HepG2 (cell line): ENCODE measurements at regions of chr3 and their contacts with region 1.

Region 1: GRCh38 chr3:8663177-8664061 is 18.8 kb upstream of the SSUH2 start:
- DNase-seq: peak; percentile 95
- ATAC-seq: peak; percentile 89
- H3K4me3 ChIP-seq: no peak overlapping the region
- H3K27ac ChIP-seq: peak overlapping the region; percentile 45
- H3K4me1 ChIP-seq: peaks cover 94% of the 10 kb centered on the region
- H3K27me3 ChIP-seq: no peaks in the 10 kb centered on the region
- CTCF ChIP-seq: peak; percentile 82
- EP300 ChIP-seq: peak in 1 of 2 experiments; percentile 48; a peak in 1 of 4 replicates
- POLR2A ChIP-seq: no peak
- RAD21 ChIP-seq: peak; percentile 65

Region 2: DNA sequence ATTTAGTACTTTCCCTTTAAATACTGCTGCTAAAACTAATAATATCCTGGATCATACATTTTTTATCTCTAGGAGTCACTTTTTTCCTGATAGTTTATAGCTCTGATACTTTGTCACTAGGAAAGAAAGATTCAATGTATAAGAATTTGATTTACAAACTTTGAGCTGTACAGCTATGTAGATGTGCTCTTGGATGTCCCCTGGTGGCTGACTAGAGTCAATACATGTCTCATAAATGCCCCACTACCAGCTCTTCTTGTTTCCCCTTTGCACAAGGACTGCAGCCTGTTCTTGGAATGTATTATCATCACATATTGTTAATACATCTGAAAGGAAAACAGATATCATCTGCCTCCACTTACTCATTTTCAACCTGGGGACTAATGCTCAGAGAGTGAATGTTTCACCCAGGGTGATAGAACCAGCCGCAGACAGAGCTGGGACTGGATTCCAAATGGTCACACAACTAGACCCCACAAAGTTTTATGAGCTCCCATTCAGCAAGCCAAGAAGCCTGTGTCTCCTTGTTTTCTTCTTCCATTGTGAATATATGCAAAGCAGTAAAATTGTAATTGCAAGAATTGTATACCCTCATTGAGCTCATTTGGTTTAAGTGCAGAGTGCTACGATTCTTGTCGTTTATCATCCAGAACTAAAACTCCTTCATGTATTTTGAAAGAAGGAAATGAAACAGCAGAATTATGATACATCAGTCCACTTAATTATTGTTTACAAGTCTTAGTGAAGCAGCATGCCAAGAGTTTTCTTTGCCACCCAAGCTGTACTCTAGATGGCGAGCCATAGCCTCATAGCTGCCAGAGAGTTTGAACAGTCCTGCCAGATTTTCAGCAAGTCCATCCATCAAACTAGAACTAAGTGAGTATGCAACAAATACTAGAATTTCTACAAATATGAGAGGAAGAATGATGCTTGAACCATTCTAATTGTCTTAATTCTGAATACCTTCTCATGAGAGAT is 423.4 kb before region 1 on chr3:
- CTCF ChIA-PET with region 1: no interaction called
- POLR2A ChIA-PET with region 1: no interaction called
- in situ Hi-C with region 1: no loop called
- intact Hi-C with region 1: no loop called
- DNase-seq: peak; percentile 27
- ATAC-seq: peak; percentile 85
- H3K4me3 ChIP-seq: no peak overlapping the region
- H3K27ac ChIP-seq: no peak overlapping the region
- H3K4me1 ChIP-seq: no peaks in the 10 kb centered on the region
- H3K27me3 ChIP-seq: no peaks in the 10 kb centered on the region
- CTCF ChIP-seq: peak; percentile 64
- EP300 ChIP-seq: no peak
- POLR2A ChIP-seq: no peak
- RAD21 ChIP-seq: no peak

Region 3: GRCh38 chr3:8650583-8651416 is 12.6 kb before region 1 on chr3:
- CTCF ChIA-PET with region 1: no interaction called
- POLR2A ChIA-PET with region 1: interaction called, 20 read pairs
- in situ Hi-C with region 1: no loop called
- intact Hi-C with region 1: no loop called
- DNase-seq: peak; percentile 69
- ATAC-seq: no peak
- H3K4me3 ChIP-seq: peak overlapping the region; percentile 56 to 71 (median 58)
- H3K27ac ChIP-seq: peak overlapping the region; percentile 83
- H3K4me1 ChIP-seq: peaks cover 100% of the 10 kb centered on the region
- H3K27me3 ChIP-seq: no peaks in the 10 kb centered on the region
- CTCF ChIP-seq: no peak
- EP300 ChIP-seq: no peak
- POLR2A ChIP-seq: no peak
- RAD21 ChIP-seq: no peak

Region 4: DNA sequence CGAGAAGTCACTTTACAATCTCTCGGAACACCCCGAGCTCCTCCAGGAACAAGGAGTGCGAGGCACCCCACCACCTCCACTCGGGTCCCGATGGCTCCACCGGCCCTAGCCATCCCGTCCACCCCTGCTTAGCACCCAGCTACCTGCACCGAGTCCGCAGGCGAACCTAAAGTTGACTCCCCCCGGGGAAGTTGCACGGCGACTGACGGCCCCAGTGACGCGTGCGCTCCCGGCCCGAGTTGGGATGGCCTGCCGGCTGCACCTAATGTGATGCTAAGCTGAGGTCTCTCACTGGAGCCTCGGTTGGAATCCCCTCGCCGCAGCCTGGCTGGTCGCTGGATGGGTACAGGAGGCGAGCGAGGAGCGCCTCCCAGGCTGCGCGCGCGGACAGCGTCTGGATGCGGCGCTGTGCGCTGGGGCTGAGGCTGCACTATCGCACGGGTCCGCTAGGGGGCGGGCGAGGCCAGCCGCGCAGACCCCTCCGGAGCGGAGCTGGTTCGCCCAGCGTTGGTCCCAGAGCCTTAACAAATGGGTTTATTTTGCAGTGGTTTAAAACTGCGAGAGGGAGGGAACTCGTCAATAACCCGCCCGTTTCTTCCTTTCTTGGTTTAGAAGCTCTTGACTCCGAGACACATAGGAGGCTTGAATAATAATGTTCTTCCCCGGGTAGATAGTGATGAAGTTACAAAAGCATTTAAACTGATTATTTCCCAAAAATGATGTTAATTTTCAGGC is 105.8 kb after region 1 on chr3 and contains the start of gene OXTR:
- CTCF ChIA-PET with region 1: interaction called, 8 read pairs
- POLR2A ChIA-PET with region 1: no interaction called
- in situ Hi-C with region 1: no loop called
- intact Hi-C with region 1: loop called (anchors 1 kb)
- DNase-seq: peak; percentile 40
- ATAC-seq: peak; percentile 96
- H3K4me3 ChIP-seq: peak within 1 kb of the TSS in 2 of 3 experiments; percentile 45 to 62; a peak in 5 of 6 replicates
- H3K27ac ChIP-seq: no peak within 1 kb of the TSS
- H3K4me1 ChIP-seq: peaks cover 32% of the 10 kb centered on the region
- H3K27me3 ChIP-seq: peaks cover 0 to 9% of the 10 kb centered on the region in 2 experiments; a peak in 2 of 5 replicates
- CTCF ChIP-seq: peak; percentile 97
- EP300 ChIP-seq: no peak
- POLR2A ChIP-seq: no peak
- RAD21 ChIP-seq: peak; percentile 92
- total RNA-seq, gene OXTR: 0.88 and 0.95 TPM in 2 replicates

Region 5: GRCh38 chr3:8963137-8963869 is 299.9 kb after region 1 on chr3 and contains the start of gene RAD18:
- CTCF ChIA-PET with region 1: no interaction called
- POLR2A ChIA-PET with region 1: no interaction called
- in situ Hi-C with region 1: no loop called
- intact Hi-C with region 1: loop called (anchors 10 kb)
- DNase-seq: peak; percentile 83
- ATAC-seq: peak; percentile 77
- H3K4me3 ChIP-seq: peak within 1 kb of the TSS; percentile 60 to 100 (median 93)
- H3K27ac ChIP-seq: peak within 1 kb of the TSS; percentile 90
- H3K4me1 ChIP-seq: peaks cover 75% of the 10 kb centered on the region
- H3K27me3 ChIP-seq: no peaks in the 10 kb centered on the region; a peak in 1 of 5 replicates
- CTCF ChIP-seq: 0 out of 2 replicates have a peak, but pooled peaks have one; percentile 7
- EP300 ChIP-seq: 0 out of 4 replicates have a peak, but pooled peaks of 1 of the 2 experiments have one; percentile 55
- POLR2A ChIP-seq: peak; percentile 51 to 59; a peak in 3 of 4 replicates
- RAD21 ChIP-seq: 0 out of 2 replicates have a peak, but pooled peaks have one; percentile 23
- total RNA-seq, gene RAD18: 20.7 and 26.5 TPM in 2 replicates